Right ventricle myocardium superior (tissue), 1 donor: ENCODE measurements at regions of chr14 and their contacts with region 1.

Region 1: DNA sequence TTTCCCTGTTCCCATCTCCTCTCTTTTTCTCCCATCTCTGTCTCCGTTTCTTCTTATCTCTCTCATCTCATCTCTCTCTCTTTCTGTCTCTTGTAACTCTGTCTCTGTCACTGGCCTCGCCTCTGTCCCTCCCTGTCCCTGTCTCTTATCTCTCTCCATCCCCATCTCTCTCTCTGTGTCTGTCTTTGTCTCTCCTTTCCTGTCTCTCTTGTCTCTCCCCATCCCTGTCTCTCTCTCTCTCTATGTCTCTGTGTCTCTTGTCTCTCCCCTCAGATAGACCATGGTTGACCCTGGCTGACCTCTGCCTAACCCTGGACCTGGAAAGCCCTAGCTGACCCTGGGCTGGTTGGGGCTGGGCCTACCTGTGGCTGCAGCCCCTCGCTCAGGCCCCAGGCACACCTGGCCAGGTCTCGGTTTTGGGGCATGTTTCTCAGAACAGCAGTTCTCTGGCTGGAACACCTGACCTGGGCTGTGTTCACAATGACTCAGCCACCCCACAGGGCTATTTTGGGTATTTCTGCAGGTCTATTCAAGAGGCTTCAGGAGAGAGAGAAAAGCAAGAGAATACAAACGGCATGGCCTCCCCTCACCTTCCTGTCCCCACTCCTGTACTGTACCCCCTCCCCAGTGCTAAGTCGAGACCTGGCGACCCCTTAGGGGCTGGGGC is 174.4 kb downstream of the TMEM121 start:
- DNase-seq: no peak
- ATAC-seq: no peak

Region 2: DNA sequence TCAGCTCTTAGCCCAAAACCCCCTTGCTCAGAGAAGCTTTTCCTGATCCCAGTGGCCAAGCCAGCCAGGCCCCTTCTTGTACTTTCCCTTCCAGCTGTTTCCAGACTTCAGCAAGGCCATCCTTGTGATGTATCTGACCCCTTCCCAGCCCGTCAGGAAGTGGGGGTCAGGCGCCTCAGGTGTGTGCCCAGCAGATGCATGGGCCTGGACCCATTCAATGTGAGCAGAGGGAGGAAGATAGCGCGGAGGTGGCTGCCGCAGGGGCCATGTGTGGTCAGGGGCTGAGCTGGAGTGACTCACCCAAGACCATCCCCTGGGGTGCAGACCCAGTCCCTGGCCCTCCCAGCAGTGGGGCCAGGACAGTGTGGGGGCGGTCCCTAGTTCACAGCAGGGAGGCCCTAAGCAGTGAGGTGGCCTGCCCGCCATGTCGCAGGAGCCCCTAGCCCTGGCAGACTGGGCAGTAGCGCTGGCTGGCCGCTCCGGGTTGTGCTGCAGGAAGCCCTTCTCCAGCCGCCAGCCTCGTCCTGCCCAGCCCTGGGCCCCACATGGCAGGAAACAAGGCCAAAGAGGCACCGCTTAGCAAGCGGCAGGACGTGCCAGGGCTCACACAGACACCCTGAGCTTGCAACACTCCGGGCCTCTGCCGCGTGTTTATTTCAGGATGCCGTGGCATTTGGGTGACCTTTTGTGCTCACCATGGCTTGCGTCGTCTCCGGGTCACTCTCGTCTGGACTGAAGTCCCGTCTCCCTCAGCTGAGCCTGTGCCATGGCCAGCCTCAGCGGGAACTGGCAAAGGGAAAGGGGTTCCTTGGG is 964.7 kb before region 1 on chr14:
- intact Hi-C with region 1: no loop called
- DNase-seq: peak; percentile 93
- ATAC-seq: peak; percentile 78

Region 3: GRCh38 chr14:105581551-105582341 is 119.0 kb before region 1 on chr14:
- intact Hi-C with region 1: loop called (anchors 10 kb)
- DNase-seq: no peak
- ATAC-seq: no peak

Region 4: GRCh38 chr14:105793836-105794235 is 93.1 kb after region 1 on chr14:
- intact Hi-C with region 1: no loop called
- DNase-seq: no peak
- ATAC-seq: no peak